Activated naive CD4-positive, alpha-beta T cell treated with anti-CD3 and anti-CD28 coated beads for 36 hours (primary cell): ENCODE measurements at regions of chr11 and their contacts with region 1.

Region 1: GRCh38 chr11:2186669-2187279 is 15.2 kb upstream of the TH start:
- DNase-seq: peak; percentile 64
- H3K4me3 Mint-ChIP-seq: no peak overlapping the region
- H3K27ac Mint-ChIP-seq: no peak overlapping the region
- H3K4me1 Mint-ChIP-seq: peaks cover 5% of the 10 kb centered on the region
- H3K27me3 Mint-ChIP-seq: no peaks in the 10 kb centered on the region

Region 2: DNA sequence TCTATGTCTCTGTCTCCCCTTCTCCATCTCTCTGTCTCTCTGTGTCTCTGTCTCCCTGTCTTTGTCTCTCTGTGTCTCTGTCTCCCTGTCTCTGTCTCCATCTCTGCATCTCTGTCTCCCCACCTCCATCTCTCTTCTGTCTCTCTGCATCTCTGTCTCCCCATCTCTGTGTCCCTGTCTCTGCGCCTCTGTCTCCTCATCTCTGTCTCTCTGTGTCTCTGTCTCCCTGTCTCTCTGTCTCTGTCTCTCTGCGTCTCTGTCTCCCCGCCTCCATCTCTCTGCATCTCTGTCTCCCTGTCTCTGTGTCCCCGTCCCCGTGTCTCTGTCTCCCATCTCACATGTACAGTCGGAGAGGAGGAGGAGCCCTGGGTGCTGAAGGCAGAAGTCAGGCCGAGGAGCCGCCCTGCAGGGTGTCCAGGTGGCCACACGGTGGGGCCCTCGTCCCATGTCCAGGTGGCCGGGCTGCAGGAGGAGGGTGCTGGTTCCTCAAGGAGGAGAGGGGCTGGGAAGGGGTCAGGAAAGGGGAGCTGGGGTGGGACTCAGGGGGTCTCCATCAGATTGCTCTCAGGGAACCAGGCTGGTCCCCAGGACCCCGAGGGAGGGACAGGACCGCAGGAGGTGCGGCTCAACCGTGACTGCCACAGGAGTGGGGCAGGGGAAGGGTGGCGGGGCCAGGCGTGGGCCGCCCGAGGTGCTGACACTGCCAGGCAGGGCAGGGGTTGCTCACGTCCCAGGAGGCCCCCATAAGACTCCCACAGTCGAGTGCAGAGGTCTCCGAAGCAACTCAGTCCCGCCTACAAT is 10.4 kb after region 1 on chr11:
- CTCF ChIA-PET with region 1: interaction called, 10 read pairs
- intact Hi-C with region 1: no loop called
- DNase-seq: peak; percentile 82
- H3K4me3 Mint-ChIP-seq: no peak overlapping the region
- H3K27ac Mint-ChIP-seq: no peak overlapping the region
- H3K4me1 Mint-ChIP-seq: no peaks in the 10 kb centered on the region
- H3K27me3 Mint-ChIP-seq: no peaks in the 10 kb centered on the region